H1 (cell line): ENCODE measurements at regions of chr5 and their contacts with region 1.

Region 1: GRCh38 chr5:123344816-123345426 is 78.3 kb downstream of the CEP120 start:
- DNase-seq: no peak
- H3K4me3 ChIP-seq: no peak overlapping the region
- H3K27ac ChIP-seq: no peak overlapping the region
- H3K4me1 ChIP-seq: no peaks in the 10 kb centered on the region
- H3K27me3 ChIP-seq: no peaks in the 10 kb centered on the region
- CTCF ChIP-seq: peak in 2 of 3 experiments; percentile 49 to 64; a peak in 2 of 4 replicates
- EP300 ChIP-seq: no peak
- POLR2A ChIP-seq: no peak
- RAD21 ChIP-seq: peak; percentile 74 to 79

Region 2: GRCh38 chr5:123099514-123100151 is 245.3 kb before region 1 on chr5:
- CTCF ChIA-PET with region 1: no interaction called
- POLR2A ChIA-PET with region 1: no interaction called
- DNase-seq: peak in 1 of 2 experiments; percentile 81
- H3K4me3 ChIP-seq: peak overlapping the region; percentile 36 to 56 (median 42)
- H3K27ac ChIP-seq: no peak overlapping the region
- H3K4me1 ChIP-seq: peaks cover 0 to 9% (median 5%) of the 10 kb centered on the region in 4 experiments; a peak in 4 of 7 replicates
- H3K27me3 ChIP-seq: peaks cover 61 to 67% (median 64%) of the 10 kb centered on the region in 4 experiments
- CTCF ChIP-seq: peak; percentile 7 to 31 (median 26); a peak in 3 of 4 replicates
- EP300 ChIP-seq: no peak
- POLR2A ChIP-seq: no peak
- RAD21 ChIP-seq: peak in 1 of 2 experiments; percentile 33; a peak in 1 of 4 replicates

Region 3: DNA sequence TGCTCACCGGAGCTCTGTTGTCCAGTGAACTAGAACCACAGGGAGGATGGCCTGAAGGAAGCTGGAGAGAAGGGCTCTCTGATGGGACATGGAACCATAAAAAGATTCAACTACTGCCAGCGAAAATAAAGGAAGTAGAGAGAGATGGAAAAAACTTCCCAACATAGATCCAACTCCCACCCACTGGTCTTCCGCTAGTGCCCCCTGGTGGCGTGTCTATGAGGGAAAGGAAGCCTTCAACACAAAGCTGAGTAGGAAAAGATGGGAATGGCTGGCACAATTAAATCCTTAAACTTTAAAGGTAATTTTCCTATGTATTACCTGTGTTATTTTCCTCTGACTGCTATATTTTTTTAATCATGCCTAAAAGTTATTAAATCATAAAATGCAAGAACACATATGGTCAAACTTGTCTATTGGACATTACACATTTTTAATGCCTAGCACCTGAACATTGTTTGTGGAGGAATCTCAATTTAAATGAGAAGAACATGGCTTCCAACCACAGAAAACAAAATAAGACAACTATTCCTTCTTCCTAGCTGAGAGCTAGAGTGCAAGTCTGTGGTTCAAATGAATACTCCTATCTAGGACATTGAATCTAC is 26.8 kb after region 1 on chr5:
- CTCF ChIA-PET with region 1: interaction called, 13 read pairs
- POLR2A ChIA-PET with region 1: no interaction called
- DNase-seq: peak; percentile 2 to 88
- H3K4me3 ChIP-seq: no peak overlapping the region
- H3K27ac ChIP-seq: no peak overlapping the region
- H3K4me1 ChIP-seq: no peaks in the 10 kb centered on the region
- H3K27me3 ChIP-seq: no peaks in the 10 kb centered on the region
- CTCF ChIP-seq: peak; percentile 46 to 70 (median 65)
- EP300 ChIP-seq: no peak
- POLR2A ChIP-seq: no peak
- RAD21 ChIP-seq: peak; percentile 55 to 66